ENCODE measurements at regions of chr15 and their contacts with region 1.

Region 1: DNA sequence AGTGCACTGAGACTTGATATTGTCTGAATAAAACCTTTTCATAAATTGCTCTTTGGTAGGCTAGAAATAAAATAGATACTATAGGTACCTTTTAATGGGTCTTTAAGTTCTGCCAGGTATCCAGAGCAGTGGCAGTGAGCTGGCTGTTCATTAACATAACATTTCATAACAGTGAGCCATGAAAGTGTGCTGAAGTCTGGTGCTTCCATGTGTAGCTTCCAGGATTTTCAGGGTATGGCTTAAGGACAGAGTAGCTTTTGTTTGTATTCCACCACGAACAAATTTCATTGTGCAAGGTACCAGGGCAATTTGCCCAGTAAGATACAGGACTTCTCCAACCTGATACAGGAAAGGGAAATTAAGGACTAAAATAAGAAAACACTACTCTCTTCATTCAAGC is 124.7 kb upstream of the NANOGP8 start:
- DNase-seq: no peak
- H3K4me3 ChIP-seq: no peak overlapping the region
- H3K27ac ChIP-seq: no peak overlapping the region
- H3K4me1 ChIP-seq: no peaks in the 10 kb centered on the region
- H3K27me3 ChIP-seq: no peaks in the 10 kb centered on the region
- CTCF ChIP-seq: no peak

Region 2: GRCh38 chr15:35166730-35167359 is 43.0 kb before region 1 on chr15:
- CTCF ChIA-PET with region 1: no interaction called
- POLR2A ChIA-PET with region 1: no interaction called
- intact Hi-C with region 1: no loop called
- DNase-seq: peak; percentile 71
- H3K4me3 ChIP-seq: no peak overlapping the region
- H3K27ac ChIP-seq: no peak overlapping the region
- H3K4me1 ChIP-seq: peaks cover 27% of the 10 kb centered on the region
- H3K27me3 ChIP-seq: no peaks in the 10 kb centered on the region
- CTCF ChIP-seq: no peak

Region 3: DNA sequence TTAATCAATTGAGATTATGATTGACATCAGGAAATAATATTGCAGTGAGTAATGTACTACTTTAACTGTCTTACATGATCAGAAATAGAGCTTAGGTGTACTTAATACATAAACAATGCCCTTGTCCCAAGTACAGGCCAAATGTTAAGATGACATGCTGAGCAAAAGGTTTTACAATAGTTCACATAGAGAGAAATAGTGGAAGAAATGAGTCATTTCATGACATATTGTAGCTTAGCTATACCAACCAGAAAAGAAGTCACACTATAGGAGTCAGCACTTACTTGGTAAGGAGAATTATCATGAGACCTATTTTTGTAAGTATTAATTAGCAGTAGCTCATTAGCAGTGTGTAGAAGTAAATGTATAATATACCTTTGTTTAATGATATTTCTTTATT is 28.3 kb before region 1 on chr15:
- CTCF ChIA-PET with region 1: no interaction called
- POLR2A ChIA-PET with region 1: interaction called, 11 read pairs
- intact Hi-C with region 1: no loop called
- DNase-seq: no peak
- H3K4me3 ChIP-seq: no peak overlapping the region
- H3K27ac ChIP-seq: no peak overlapping the region
- H3K4me1 ChIP-seq: peaks cover 18% of the 10 kb centered on the region
- H3K27me3 ChIP-seq: no peaks in the 10 kb centered on the region
- CTCF ChIP-seq: no peak

Region 4: DNA sequence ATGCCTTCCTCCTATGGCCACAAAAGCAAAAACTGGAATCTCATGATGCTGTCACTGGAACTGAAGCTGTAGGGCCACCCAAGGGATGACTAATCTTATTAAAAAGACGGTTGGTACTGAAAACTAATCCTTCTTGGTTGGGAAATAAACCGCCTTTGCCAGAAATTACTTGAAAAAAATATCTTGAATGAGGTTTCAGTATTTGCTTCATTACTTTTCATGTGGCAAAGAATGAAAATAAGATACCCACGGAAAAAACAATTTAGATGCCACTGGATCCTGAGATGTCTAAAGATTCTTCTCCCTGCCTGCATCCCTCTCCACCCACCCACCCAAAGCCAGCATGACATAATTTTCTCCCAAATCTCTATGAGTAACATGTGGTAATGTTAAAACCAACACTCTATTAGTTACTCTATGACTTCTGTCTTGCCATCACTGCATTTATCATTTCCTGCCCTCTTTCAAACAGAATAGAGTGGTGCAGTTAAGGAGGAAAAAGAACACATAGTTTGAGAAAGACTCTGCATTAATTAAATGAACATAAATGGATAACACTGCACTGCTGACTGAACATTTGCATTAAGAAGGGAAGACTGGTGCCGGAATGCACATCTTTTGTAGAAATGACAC is 448.0 kb after region 1 on chr15:
- CTCF ChIA-PET with region 1: no interaction called
- POLR2A ChIA-PET with region 1: no interaction called
- intact Hi-C with region 1: no loop called
- DNase-seq: peak; percentile 92
- H3K4me3 ChIP-seq: no peak overlapping the region
- H3K27ac ChIP-seq: peak overlapping the region; percentile 76
- H3K4me1 ChIP-seq: peaks cover 17% of the 10 kb centered on the region
- H3K27me3 ChIP-seq: no peaks in the 10 kb centered on the region
- CTCF ChIP-seq: no peak

Measured in A673 (cell line).